ENCODE measurements at regions of chr17 and their contacts with region 1.

Region 1: DNA sequence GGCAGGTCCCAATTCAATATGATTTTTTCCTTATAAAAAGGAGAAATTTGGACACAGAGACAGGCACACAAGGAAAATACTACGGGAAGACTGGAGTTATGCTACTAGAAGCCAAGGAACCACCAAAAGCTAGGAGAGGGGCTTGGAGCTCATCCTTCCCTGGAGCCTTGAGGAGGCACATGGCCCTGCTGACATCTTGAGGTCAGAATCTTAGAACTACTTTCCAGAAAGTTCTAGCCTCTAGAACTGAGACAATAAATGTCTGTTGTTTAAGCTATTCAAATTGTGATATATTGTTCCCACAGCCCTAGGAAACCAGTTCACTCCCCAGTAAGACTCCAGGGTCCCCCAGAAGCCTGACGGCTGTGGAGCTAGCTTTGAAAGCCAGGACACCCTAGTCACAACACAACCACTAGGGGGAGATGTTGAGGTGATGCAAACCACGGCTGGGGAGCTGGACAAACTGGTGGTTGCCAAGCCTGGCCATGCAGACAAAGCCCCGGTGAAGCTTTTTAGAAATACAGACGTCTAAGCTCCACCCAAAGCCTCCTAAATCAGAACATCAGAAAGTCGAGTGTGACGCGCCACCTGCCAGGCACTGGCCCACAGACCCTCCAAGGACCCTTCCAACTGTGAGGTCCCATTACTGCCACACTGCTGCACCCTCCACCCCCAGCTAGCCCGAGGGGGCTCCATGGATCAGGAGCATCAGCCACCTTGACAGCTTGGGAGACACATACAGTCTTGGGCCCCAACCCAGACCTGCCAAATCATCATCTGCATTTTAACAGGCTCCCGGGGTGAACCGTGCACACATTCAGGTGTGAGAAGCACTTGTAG is 106.4 kb downstream of the SLC39A11 start:
- DNase-seq: peak; percentile 39 to 84
- H3K4me3 ChIP-seq: no peak overlapping the region
- H3K27ac ChIP-seq: no peak overlapping the region
- H3K4me1 ChIP-seq: peaks cover 0 to 2% (median 0%) of the 10 kb centered on the region in 4 experiments; a peak in 2 of 7 replicates
- H3K27me3 ChIP-seq: no peaks in the 10 kb centered on the region
- CTCF ChIP-seq: peak; percentile 89 to 93 (median 92)
- EP300 ChIP-seq: no peak
- POLR2A ChIP-seq: no peak
- RAD21 ChIP-seq: peak; percentile 84 to 91

Region 2: GRCh38 chr17:72890711-72891110 is 95.4 kb before region 1 on chr17:
- CTCF ChIA-PET with region 1: no interaction called
- POLR2A ChIA-PET with region 1: no interaction called
- DNase-seq: no peak
- H3K4me3 ChIP-seq: no peak overlapping the region
- H3K27ac ChIP-seq: no peak overlapping the region
- H3K4me1 ChIP-seq: no peaks in the 10 kb centered on the region
- H3K27me3 ChIP-seq: no peaks in the 10 kb centered on the region
- CTCF ChIP-seq: no peak
- EP300 ChIP-seq: no peak
- POLR2A ChIP-seq: no peak
- RAD21 ChIP-seq: no peak

Region 3: DNA sequence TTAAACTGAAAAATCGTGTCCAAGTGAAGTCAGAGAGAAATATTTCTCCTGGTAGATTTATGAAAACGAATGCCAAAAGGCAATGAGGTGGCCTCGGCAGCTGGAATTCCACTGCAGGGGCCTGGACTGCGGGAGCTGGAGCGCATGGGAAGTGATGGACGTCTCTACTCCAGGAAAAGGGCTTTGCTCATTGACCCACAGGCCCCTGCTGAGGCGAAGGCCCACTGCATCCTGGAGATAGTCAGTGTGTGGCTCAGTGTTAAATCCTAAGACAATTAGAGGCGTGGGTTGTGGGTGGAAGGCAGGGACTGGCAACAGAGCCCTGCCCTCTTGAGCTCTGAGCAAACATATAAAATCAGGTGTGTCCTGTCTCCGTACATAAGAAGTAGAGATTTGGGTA is 85.0 kb before region 1 on chr17:
- CTCF ChIA-PET with region 1: no interaction called
- POLR2A ChIA-PET with region 1: no interaction called
- DNase-seq: no peak
- H3K4me3 ChIP-seq: no peak overlapping the region
- H3K27ac ChIP-seq: no peak overlapping the region
- H3K4me1 ChIP-seq: peaks cover 0 to 6% (median 0%) of the 10 kb centered on the region in 4 experiments; a peak in 1 of 7 replicates
- H3K27me3 ChIP-seq: no peaks in the 10 kb centered on the region
- CTCF ChIP-seq: no peak
- EP300 ChIP-seq: no peak
- POLR2A ChIP-seq: no peak
- RAD21 ChIP-seq: no peak

Region 4: GRCh38 chr17:72952220-72952984 is 33.7 kb before region 1 on chr17:
- CTCF ChIA-PET with region 1: interaction called, 11 read pairs
- POLR2A ChIA-PET with region 1: no interaction called
- DNase-seq: no peak
- H3K4me3 ChIP-seq: no peak overlapping the region
- H3K27ac ChIP-seq: no peak overlapping the region
- H3K4me1 ChIP-seq: peaks cover 4 to 18% (median 11%) of the 10 kb centered on the region in 4 experiments; a peak in 5 of 7 replicates
- H3K27me3 ChIP-seq: no peaks in the 10 kb centered on the region
- CTCF ChIP-seq: peak; percentile 29 to 56 (median 54)
- EP300 ChIP-seq: no peak
- POLR2A ChIP-seq: no peak
- RAD21 ChIP-seq: peak; percentile 42 to 49

Region 5: DNA sequence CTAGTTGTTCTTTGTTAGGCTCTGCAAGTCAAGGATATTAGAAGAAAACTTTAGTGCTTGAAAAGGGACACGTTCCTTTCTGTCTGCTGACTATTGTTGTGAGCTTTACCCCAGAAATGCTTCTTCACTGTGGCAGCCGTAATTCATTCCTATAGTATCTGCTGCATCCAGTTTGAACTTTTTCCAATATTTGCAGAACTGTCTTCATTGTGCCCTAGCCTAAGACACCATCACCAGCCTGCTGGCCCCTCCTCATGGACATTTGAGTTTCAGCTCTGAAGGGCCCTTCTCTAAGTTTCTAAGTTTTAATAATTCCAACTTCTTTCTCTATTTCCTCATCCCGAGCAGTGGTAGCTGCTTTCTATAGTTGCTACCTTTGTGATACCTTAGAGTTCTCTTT is 14.7 kb after region 1 on chr17:
- CTCF ChIA-PET with region 1: interaction called, 14 read pairs
- POLR2A ChIA-PET with region 1: no interaction called
- DNase-seq: no peak
- H3K4me3 ChIP-seq: no peak overlapping the region
- H3K27ac ChIP-seq: no peak overlapping the region
- H3K4me1 ChIP-seq: peaks cover 0 to 2% (median 0%) of the 10 kb centered on the region in 4 experiments; a peak in 2 of 7 replicates
- H3K27me3 ChIP-seq: no peaks in the 10 kb centered on the region
- CTCF ChIP-seq: no peak
- EP300 ChIP-seq: no peak
- POLR2A ChIP-seq: no peak
- RAD21 ChIP-seq: no peak

Region 6: GRCh38 chr17:73156166-73156840 is 170.2 kb after region 1 on chr17:
- CTCF ChIA-PET with region 1: interaction called, 41 read pairs
- POLR2A ChIA-PET with region 1: no interaction called
- DNase-seq: peak in 1 of 2 experiments; percentile 89
- H3K4me3 ChIP-seq: no peak overlapping the region
- H3K27ac ChIP-seq: no peak overlapping the region
- H3K4me1 ChIP-seq: peaks cover 5 to 10% (median 8%) of the 10 kb centered on the region in 4 experiments; a peak in 6 of 7 replicates
- H3K27me3 ChIP-seq: no peaks in the 10 kb centered on the region; a peak in 2 of 7 replicates
- CTCF ChIP-seq: peak; percentile 73 to 88 (median 81)
- EP300 ChIP-seq: no peak
- POLR2A ChIP-seq: no peak
- RAD21 ChIP-seq: peak; percentile 82 to 86

Region 7: GRCh38 chr17:73166731-73167581 is 180.9 kb after region 1 on chr17:
- CTCF ChIA-PET with region 1: interaction called, 10 read pairs
- POLR2A ChIA-PET with region 1: no interaction called
- DNase-seq: no peak
- H3K4me3 ChIP-seq: peak overlapping the region in 1 of 4 experiments; percentile 71; a peak in 2 of 8 replicates
- H3K27ac ChIP-seq: no peak overlapping the region
- H3K4me1 ChIP-seq: peaks cover 4 to 20% (median 10%) of the 10 kb centered on the region in 4 experiments
- H3K27me3 ChIP-seq: peaks cover 12 to 48% (median 46%) of the 10 kb centered on the region in 4 experiments
- CTCF ChIP-seq: no peak
- EP300 ChIP-seq: no peak
- POLR2A ChIP-seq: no peak
- RAD21 ChIP-seq: no peak

Region 8: DNA sequence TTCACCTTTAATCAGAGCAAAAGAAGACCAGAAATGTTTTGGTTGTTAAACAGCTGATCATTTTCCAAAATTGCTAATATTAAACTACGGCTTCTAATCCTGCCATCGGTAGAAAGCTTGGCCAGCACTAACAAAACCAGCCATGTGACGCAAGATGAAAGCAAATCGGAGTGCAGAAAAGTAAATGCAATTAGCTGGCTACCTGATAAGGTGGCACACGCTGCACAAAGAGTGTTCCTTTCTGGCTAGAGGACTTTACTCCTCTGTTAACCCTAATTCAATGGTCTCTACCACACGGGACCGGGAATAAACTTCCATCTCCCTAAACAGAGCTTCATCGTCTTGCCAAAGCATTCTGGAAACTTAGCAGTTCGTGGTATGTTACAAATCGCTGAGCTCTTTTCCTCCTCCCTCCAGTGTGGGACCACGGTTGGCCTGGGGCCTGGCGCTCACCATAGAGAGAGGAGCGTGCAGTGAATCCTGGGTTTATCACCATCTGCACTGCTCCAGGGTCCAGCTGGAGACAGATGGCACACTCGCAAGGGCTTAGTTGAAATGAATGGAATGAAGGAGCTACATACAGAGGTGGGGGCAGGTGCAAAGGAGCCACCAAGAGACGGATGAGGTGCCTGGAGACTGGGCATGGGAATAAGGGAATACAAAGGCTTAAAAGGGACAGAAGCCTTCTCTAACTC is 196.7 kb after region 1 on chr17:
- CTCF ChIA-PET with region 1: interaction called, 58 read pairs
- POLR2A ChIA-PET with region 1: no interaction called
- DNase-seq: no peak
- H3K4me3 ChIP-seq: no peak overlapping the region
- H3K27ac ChIP-seq: no peak overlapping the region
- H3K4me1 ChIP-seq: no peaks in the 10 kb centered on the region
- H3K27me3 ChIP-seq: no peaks in the 10 kb centered on the region
- CTCF ChIP-seq: no peak
- EP300 ChIP-seq: no peak
- POLR2A ChIP-seq: no peak
- RAD21 ChIP-seq: no peak